Activated CD4-positive, alpha-beta T cell treated with anti-CD3 and anti-CD28 coated beads, Interleukin-2, amount 10 ng/mL, durations not matched to agents 7 days and 5 days (primary cell): ENCODE measurements at regions of chr12 and their contacts with region 1.

Region 1: DNA sequence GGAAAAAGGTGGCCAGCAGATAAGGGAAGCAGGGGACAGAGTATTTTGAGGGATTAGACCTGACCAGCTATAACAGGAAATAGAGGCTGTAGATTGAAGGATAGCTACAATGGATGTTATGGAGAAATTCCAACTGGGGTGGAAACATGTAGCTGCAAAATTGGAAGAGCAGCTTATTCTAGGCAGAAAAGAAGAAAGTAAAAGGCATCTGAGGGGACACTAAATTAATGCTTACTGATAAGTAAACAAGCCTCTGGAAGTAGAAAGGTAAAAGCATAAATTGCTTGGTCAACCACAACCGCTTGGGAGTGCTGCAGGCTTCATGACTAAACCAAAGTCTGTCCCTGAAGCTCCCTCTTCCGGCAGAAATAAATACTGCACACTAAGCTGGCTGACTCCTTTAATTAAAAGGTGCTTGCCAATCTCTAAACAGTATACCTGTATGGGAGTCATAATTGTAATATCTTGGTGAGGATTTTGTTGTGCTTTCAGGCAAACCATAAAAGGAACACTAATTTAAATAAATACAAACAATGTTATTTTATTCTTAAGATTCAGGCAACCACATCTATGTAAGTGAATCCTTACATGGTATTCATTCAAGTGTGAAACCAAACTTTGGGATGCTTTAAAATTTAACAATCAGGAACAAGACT is 7.7 kb downstream of the UBC start:
- DNase-seq: peak; percentile 97
- H3K4me3 Mint-ChIP-seq: no peak overlapping the region
- H3K27ac Mint-ChIP-seq: no peak overlapping the region
- H3K4me1 Mint-ChIP-seq: peaks cover 29% of the 10 kb centered on the region
- H3K27me3 Mint-ChIP-seq: no peaks in the 10 kb centered on the region

Region 2: GRCh38 chr12:124814741-124815613 is 91.8 kb before region 1 on chr12:
- CTCF ChIA-PET with region 1: no interaction called
- POLR2A ChIA-PET with region 1: no interaction called
- DNase-seq: no peak
- H3K4me3 Mint-ChIP-seq: no peak overlapping the region
- H3K27ac Mint-ChIP-seq: no peak overlapping the region
- H3K4me1 Mint-ChIP-seq: no peaks in the 10 kb centered on the region
- H3K27me3 Mint-ChIP-seq: no peaks in the 10 kb centered on the region

Region 3: GRCh38 chr12:124872068-124872719 is 34.5 kb before region 1 on chr12:
- CTCF ChIA-PET with region 1: no interaction called
- POLR2A ChIA-PET with region 1: no interaction called
- DNase-seq: no peak
- H3K4me3 Mint-ChIP-seq: no peak overlapping the region
- H3K27ac Mint-ChIP-seq: no peak overlapping the region
- H3K4me1 Mint-ChIP-seq: peaks cover 13% of the 10 kb centered on the region
- H3K27me3 Mint-ChIP-seq: peaks cover 8% of the 10 kb centered on the region

Region 4: DNA sequence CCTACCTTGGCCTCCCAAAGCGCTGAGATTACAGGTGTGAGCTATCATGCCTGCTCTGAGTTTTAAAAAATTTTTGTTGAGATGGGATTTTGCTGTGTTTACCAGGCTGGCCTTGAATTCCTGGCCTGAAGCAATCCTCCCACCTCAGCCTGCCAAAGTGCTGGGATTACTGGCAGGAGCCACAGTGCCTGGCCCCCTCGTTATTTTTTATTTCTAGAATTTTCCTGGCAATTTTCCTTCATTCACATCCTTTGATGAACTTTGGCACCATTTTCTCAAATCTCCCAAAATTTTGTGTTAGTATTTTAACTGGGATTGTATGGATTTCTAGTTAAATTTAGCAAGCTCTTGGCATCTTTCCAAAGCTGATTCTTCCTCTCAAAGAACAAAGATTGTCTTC is 18.5 kb before region 1 on chr12:
- CTCF ChIA-PET with region 1: interaction called, 13 read pairs
- POLR2A ChIA-PET with region 1: no interaction called
- DNase-seq: no peak
- H3K4me3 Mint-ChIP-seq: no peak overlapping the region
- H3K27ac Mint-ChIP-seq: no peak overlapping the region
- H3K4me1 Mint-ChIP-seq: no peaks in the 10 kb centered on the region
- H3K27me3 Mint-ChIP-seq: no peaks in the 10 kb centered on the region

Region 5: GRCh38 chr12:124893792-124894516 is 12.8 kb before region 1 on chr12:
- CTCF ChIA-PET with region 1: interaction called, 13 read pairs
- POLR2A ChIA-PET with region 1: no interaction called
- DNase-seq: no peak
- H3K4me3 Mint-ChIP-seq: no peak overlapping the region
- H3K27ac Mint-ChIP-seq: no peak overlapping the region
- H3K4me1 Mint-ChIP-seq: peaks cover 11% of the 10 kb centered on the region
- H3K27me3 Mint-ChIP-seq: no peaks in the 10 kb centered on the region

Region 6: DNA sequence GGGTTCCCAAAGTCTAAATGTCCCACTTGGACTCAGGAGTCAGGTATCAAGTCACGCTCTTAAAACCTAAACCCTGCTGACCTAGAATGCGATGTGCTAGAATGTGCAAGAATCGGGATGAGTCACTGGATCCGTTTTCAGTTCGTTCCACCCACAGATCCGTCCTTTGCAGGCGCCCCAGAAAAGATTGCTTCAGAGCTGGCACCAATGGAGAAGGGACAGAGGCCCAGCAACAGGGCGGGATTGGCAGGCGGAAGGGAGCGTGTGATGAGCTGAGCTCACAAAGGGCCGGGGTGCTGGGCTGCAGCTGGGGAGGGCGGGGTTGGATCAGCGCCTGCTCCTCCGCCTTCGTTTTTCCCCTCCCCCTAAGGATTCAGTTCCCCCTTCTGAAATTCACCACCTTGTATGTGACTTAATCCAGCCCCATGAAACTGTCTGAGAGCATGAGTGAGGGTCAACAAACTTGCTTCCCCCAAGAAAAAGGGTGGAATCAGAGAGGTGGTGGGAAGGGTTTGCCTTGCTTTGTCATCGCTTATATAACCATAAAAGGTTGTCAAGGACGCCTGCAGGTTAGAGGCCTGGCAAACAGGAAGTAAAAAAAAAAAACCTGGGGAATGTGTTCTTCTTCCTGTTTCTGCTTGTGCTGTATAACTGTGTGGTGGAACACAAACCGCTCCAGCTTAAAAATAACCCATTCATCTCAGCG is 10.6 kb after region 1 on chr12:
- CTCF ChIA-PET with region 1: interaction called, 42 read pairs
- POLR2A ChIA-PET with region 1: interaction called, 5 read pairs
- DNase-seq: peak; percentile 97
- H3K4me3 Mint-ChIP-seq: peak overlapping the region; percentile 99
- H3K27ac Mint-ChIP-seq: peak overlapping the region; percentile 100
- H3K4me1 Mint-ChIP-seq: peaks cover 85% of the 10 kb centered on the region
- H3K27me3 Mint-ChIP-seq: no peaks in the 10 kb centered on the region

Region 7: DNA sequence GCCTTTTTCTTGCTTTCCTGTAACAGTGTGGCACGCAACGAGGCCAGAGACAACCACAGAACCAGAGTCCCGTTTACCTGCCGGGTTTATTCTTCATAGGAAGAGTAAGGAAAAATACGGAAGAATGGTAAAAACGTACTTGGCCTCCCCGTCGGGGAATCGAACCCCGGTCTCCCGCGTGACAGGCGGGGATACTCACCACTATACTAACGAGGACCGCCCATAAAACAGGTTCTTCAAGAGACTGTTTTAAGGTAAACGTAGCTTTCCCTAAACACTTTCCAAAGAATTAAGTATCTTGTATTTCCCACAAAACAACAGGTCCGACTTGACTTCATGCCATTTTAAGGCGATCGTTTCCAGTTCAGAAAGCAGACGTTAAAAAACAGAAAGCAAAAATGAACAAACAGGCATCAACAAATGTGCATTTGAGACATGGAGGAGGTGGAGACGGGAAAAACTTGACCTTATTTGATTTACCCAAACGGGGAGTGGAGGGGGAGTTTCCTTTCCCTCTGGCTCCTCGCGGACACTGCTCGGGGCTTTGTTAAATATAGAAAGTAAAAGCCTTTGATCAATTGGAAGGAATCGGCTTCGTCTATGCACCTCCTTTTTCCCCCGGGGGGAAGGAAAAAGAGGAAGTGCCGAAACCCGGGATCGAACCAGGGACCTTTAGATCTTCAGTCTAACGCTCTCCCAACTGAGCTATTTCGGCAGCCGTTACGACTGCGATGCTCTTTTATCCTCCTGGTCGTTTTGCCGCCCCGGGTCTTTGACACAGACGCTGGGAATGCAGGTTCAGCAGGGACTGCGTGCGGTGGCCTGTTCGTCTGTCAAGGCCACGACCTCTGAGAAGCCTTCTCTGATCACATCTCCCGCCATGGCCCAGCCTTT is 20.7 kb after region 1 on chr12:
- CTCF ChIA-PET with region 1: interaction called, 13 read pairs
- POLR2A ChIA-PET with region 1: no interaction called
- DNase-seq: peak; percentile 91
- H3K4me3 Mint-ChIP-seq: peak overlapping the region; percentile 89
- H3K27ac Mint-ChIP-seq: peak overlapping the region; percentile 96
- H3K4me1 Mint-ChIP-seq: peaks cover 37% of the 10 kb centered on the region
- H3K27me3 Mint-ChIP-seq: peaks cover 7% of the 10 kb centered on the region

Region 8: GRCh38 chr12:124940549-124941527 is 34.1 kb after region 1 on chr12:
- CTCF ChIA-PET with region 1: interaction called, 45 read pairs
- POLR2A ChIA-PET with region 1: interaction called, 5 read pairs
- DNase-seq: peak; percentile 89
- H3K4me3 Mint-ChIP-seq: no peak overlapping the region
- H3K27ac Mint-ChIP-seq: no peak overlapping the region
- H3K4me1 Mint-ChIP-seq: peaks cover 26% of the 10 kb centered on the region
- H3K27me3 Mint-ChIP-seq: no peaks in the 10 kb centered on the region

Region 9: DNA sequence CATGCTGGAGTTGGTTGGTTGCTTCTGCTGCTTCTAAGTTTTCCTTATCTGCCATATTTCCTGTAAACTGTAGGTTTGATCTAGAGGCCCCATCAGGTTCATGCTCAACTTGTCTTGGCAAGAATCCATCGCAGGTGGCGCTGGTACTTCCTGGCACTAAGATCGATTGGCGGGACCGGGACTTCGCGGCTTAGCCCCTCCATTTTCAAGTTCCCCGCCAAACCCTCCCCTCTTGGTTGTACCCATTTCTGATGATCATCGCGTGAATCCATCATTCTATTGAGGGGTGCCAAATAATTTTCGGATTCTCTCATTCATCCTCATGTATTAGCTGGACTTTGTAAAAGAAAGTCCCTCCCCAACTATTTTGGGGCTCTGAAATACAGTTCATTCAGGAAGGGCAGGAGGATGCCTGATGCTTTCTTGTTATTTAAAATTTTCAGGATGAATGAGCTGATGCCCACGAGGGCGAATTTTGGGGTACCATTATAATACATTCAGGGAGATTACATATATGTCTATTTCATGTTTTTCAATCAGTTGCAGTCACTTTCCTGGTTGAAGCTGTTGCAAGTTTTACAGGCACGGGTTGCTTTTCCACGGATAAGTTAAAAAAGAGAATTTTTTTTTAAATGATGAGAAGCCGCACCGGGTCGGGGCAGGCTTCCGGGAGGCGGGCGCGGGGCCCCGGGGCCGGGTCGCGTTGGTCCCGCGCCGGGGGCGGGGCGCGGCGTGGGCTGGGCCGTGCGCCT is 86.3 kb after region 1 on chr12:
- CTCF ChIA-PET with region 1: interaction called, 11 read pairs
- POLR2A ChIA-PET with region 1: no interaction called
- DNase-seq: peak; percentile 91
- H3K4me3 Mint-ChIP-seq: peak overlapping the region; percentile 83
- H3K27ac Mint-ChIP-seq: peak overlapping the region; percentile 90
- H3K4me1 Mint-ChIP-seq: peaks cover 36% of the 10 kb centered on the region
- H3K27me3 Mint-ChIP-seq: no peaks in the 10 kb centered on the region